Kidney (tissue), 22 donors: ENCODE measurements at regions of chr4 and their contacts with region 1.

Region 1: DNA sequence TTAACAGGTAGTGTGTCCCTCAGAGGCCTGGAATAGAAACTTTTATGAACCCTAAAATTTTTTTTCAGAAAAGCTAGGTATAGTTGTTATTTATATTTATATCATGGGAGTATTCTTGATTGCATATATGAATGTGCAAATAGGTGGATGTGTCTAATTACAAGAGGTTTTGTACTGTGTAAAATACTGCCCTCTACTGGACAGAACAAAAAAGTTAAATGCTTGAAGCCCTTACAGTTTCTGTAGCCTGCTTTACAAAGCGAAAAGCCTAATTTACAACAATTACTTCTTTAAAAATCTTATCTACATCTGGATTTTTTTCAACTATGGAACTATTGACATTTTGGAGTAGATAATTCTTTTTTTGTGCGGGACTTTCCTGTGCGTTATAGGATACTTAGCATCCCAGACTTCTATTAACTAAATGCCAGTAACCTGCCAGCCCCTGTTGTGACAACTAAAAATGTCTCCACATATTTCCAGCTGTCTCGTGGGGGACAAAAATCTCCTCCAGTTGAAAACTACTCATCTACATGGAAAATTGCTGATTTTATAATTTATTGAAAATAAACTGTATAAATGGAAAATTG is 35.1 kb downstream of the ENPEP start:
- DNase-seq: peak in 2 of 5 donors; percentile 74 to 84
- H3K4me3 ChIP-seq: no peak overlapping the region
- H3K27ac ChIP-seq: no peak overlapping the region
- H3K4me1 ChIP-seq: no peaks in the 10 kb centered on the region
- H3K27me3 ChIP-seq: no peaks in the 10 kb centered on the region
- CTCF ChIP-seq: peak; percentile 55

Region 2: GRCh38 chr4:109599046-109599652 is 911.9 kb before region 1 on chr4:
- intact Hi-C with region 1: no loop called
- DNase-seq: no peak
- H3K4me3 ChIP-seq: no peak overlapping the region
- H3K27ac ChIP-seq: no peak overlapping the region
- H3K4me1 ChIP-seq: no peaks in the 10 kb centered on the region
- H3K27me3 ChIP-seq: no peaks in the 10 kb centered on the region
- CTCF ChIP-seq: no peak

Region 3: DNA sequence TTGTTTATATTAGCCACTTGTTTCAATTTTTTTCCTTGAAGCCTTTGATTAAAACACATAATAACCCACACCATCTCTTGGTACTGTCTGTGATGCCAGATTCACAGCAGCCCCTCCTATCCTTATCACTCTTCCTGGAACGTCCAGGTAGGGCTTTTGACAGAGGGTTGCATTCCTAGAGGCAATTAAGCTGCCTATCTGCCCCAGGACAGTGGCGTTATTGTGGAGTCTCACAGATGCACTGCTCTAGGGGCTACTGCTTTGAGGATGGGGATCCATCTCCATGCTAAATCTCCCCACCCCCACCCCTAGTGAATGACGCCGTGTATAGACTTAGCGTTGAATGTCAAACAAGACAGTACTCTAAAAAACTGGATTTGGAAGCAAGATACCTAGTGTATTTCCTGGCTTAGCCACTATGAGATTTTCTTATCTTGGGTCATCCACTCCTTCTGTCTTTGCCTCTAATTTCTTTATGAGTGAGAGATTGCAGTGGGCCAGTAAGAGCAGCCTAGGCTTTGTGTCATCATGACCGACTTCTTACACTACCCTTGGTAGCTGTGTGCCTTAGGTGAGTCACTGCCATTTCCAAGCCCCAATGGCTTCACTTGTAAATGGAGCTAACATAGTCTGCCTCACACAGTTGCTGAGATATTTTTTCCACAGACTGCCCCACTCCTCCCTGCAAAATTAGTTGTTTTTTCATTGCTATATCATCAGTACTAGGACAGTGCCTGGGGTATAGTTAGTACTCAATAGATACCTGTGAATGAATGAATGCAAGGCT is 507.5 kb before region 1 on chr4:
- intact Hi-C with region 1: loop called (anchors 5 kb)
- DNase-seq: no peak
- H3K4me3 ChIP-seq: no peak overlapping the region
- H3K27ac ChIP-seq: no peak overlapping the region
- H3K4me1 ChIP-seq: peaks cover 0 to 24% (median 11%) of the 10 kb centered on the region in 3 donors
- H3K27me3 ChIP-seq: no peaks in the 10 kb centered on the region
- CTCF ChIP-seq: no peak

Region 4: GRCh38 chr4:110087070-110087708 is 423.9 kb before region 1 on chr4:
- intact Hi-C with region 1: no loop called
- DNase-seq: peak in 2 of 5 donors; percentile 67 to 81
- H3K4me3 ChIP-seq: no peak overlapping the region
- H3K27ac ChIP-seq: no peak overlapping the region
- H3K4me1 ChIP-seq: peaks cover 0 to 4% (median 0%) of the 10 kb centered on the region in 3 donors
- H3K27me3 ChIP-seq: no peaks in the 10 kb centered on the region
- CTCF ChIP-seq: no peak

Region 5: DNA sequence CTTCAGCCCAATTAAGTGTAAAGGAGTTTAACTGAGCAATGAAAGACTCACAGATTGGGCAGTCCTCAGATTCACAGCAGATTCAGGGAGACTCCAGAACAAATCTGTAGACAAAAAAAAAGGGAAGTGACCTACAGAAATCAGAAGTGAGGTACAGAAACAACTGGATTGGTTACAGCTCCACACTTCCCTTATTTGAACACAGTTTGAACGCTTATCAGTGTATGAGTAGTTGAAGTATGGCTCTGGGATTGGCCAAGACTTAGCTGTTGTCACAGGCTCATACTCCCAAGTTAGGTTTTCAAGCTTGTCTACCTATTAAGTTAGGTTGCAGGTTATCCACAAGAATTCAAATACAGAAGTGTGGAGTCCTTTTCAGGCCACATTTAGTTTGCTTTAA is 200.3 kb before region 1 on chr4:
- intact Hi-C with region 1: loop called (anchors 5 kb)
- DNase-seq: no peak
- H3K4me3 ChIP-seq: no peak overlapping the region
- H3K27ac ChIP-seq: no peak overlapping the region
- H3K4me1 ChIP-seq: no peaks in the 10 kb centered on the region
- H3K27me3 ChIP-seq: no peaks in the 10 kb centered on the region
- CTCF ChIP-seq: no peak